ENCODE measurements at regions of chr1 and their contacts with region 1.

Region 1: GRCh38 chr1:77044136-77044849 is 174.9 kb downstream of the PIGK start:
- DNase-seq: no peak
- H3K4me3 ChIP-seq: no peak overlapping the region
- H3K27ac ChIP-seq: no peak overlapping the region
- H3K4me1 ChIP-seq: no peaks in the 10 kb centered on the region
- H3K27me3 ChIP-seq: peaks cover 18% of the 10 kb centered on the region
- CTCF ChIP-seq: no peak

Region 2: GRCh38 chr1:76444773-76445172 is 599.5 kb before region 1 on chr1:
- CTCF ChIA-PET with region 1: no interaction called
- POLR2A ChIA-PET with region 1: no interaction called
- intact Hi-C with region 1: no loop called
- DNase-seq: no peak
- H3K4me3 ChIP-seq: no peak overlapping the region
- H3K27ac ChIP-seq: no peak overlapping the region
- H3K4me1 ChIP-seq: no peaks in the 10 kb centered on the region
- H3K27me3 ChIP-seq: no peaks in the 10 kb centered on the region
- CTCF ChIP-seq: no peak

Region 3: GRCh38 chr1:76919085-76919484 is 125.2 kb before region 1 on chr1:
- CTCF ChIA-PET with region 1: no interaction called
- POLR2A ChIA-PET with region 1: no interaction called
- intact Hi-C with region 1: no loop called
- DNase-seq: no peak
- H3K4me3 ChIP-seq: no peak overlapping the region
- H3K27ac ChIP-seq: no peak overlapping the region
- H3K4me1 ChIP-seq: no peaks in the 10 kb centered on the region
- H3K27me3 ChIP-seq: peaks cover 18% of the 10 kb centered on the region
- CTCF ChIP-seq: no peak

Region 4: GRCh38 chr1:77089756-77090155 is 45.5 kb after region 1 on chr1:
- CTCF ChIA-PET with region 1: no interaction called
- POLR2A ChIA-PET with region 1: no interaction called
- intact Hi-C with region 1: loop called (anchors 1 kb)
- DNase-seq: no peak
- H3K4me3 ChIP-seq: no peak overlapping the region
- H3K27ac ChIP-seq: no peak overlapping the region
- H3K4me1 ChIP-seq: no peaks in the 10 kb centered on the region
- H3K27me3 ChIP-seq: no peaks in the 10 kb centered on the region
- CTCF ChIP-seq: no peak